Heart right ventricle (tissue), 16 donors: ENCODE measurements at regions of chr1 and their contacts with region 1.

Region 1: GRCh38 chr1:234309598-234310459 is 63.4 kb upstream of the COA6 start:
- DNase-seq: peak; percentile 35 to 39
- ATAC-seq: peak; percentile 62 to 81 (median 72)
- H3K4me3 ChIP-seq: no peak overlapping the region
- H3K27ac ChIP-seq: no peak overlapping the region
- H3K4me1 ChIP-seq: peaks cover 0 to 9% (median 0%) of the 10 kb centered on the region in 9 donors
- H3K27me3 ChIP-seq: peaks cover 0 to 30% (median 0%) of the 10 kb centered on the region in 7 donors
- CTCF ChIP-seq: peak; percentile 66 to 93 (median 79)

Region 2: GRCh38 chr1:234114648-234115307 is 195.1 kb before region 1 on chr1:
- intact Hi-C with region 1: loop called in 9 of 10 experiments (anchors 5 to 10 kb)
- DNase-seq: peak in 1 of 2 donors; percentile 26
- ATAC-seq: no peak
- H3K4me3 ChIP-seq: no peak overlapping the region
- H3K27ac ChIP-seq: no peak overlapping the region
- H3K4me1 ChIP-seq: no peaks in the 10 kb centered on the region
- H3K27me3 ChIP-seq: peaks cover 0 to 24% (median 3%) of the 10 kb centered on the region in 7 donors
- CTCF ChIP-seq: peak; percentile 27 to 78 (median 70)

Region 3: DNA sequence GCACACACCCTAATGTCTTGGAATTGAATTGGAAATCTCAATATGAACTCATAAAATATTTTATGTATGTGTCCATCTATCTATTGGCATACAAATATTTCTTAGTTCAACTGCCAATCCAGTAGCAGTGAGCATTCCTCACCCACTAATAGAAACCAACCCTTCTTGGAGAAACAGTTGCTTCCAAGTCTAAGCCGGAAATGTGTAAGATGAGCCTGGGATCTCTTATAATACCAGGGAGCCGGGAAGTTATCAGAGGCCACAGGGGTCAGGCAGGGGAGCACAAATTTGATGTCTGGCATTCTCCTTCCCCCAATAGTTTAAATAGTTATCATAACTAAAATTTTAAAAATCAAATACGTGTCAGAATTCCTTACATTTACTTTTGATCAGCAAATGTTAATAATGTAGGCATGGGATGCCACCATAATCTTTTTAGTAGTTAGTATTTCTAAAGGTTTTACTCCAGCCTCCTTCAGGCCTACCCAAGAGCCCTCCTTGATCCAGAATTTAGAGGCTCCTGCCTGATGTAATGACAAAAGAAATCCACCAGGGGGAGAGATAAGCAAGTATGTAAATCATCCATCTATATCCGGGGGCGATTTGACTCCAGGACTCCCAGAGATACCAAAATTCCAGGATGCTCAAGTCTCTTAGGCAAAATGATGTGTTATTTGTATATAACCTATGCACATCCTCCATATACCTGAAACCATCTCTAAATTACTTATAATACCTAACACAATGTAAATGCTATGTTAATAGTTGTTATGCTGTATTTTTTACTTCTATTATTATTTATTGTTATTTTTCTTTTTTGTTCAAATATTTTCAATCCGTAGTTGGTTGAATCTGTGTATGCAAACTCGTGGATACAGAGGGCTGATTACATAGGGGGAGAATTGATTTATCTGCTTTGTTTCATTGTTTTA is 155.2 kb before region 1 on chr1:
- intact Hi-C with region 1: loop called in 8 of 10 experiments (anchors 2 to 10 kb)
- DNase-seq: peak in 1 of 2 donors; percentile 14
- ATAC-seq: peak in 1 of 8 donors; percentile 33
- H3K4me3 ChIP-seq: no peak overlapping the region
- H3K27ac ChIP-seq: no peak overlapping the region
- H3K4me1 ChIP-seq: no peaks in the 10 kb centered on the region
- H3K27me3 ChIP-seq: peaks cover 0 to 10% (median 2%) of the 10 kb centered on the region in 7 donors
- CTCF ChIP-seq: peak; percentile 42 to 88 (median 73)

Region 4: GRCh38 chr1:234163267-234163919 is 146.4 kb before region 1 on chr1:
- intact Hi-C with region 1: loop called in 5 of 10 experiments (anchors 10 kb)
- DNase-seq: no peak
- ATAC-seq: peak in 2 of 8 donors; percentile 21 to 55
- H3K4me3 ChIP-seq: no peak overlapping the region
- H3K27ac ChIP-seq: no peak overlapping the region
- H3K4me1 ChIP-seq: no peaks in the 10 kb centered on the region
- H3K27me3 ChIP-seq: peaks cover 0 to 27% (median 4%) of the 10 kb centered on the region in 7 donors
- CTCF ChIP-seq: no peak

Region 5: DNA sequence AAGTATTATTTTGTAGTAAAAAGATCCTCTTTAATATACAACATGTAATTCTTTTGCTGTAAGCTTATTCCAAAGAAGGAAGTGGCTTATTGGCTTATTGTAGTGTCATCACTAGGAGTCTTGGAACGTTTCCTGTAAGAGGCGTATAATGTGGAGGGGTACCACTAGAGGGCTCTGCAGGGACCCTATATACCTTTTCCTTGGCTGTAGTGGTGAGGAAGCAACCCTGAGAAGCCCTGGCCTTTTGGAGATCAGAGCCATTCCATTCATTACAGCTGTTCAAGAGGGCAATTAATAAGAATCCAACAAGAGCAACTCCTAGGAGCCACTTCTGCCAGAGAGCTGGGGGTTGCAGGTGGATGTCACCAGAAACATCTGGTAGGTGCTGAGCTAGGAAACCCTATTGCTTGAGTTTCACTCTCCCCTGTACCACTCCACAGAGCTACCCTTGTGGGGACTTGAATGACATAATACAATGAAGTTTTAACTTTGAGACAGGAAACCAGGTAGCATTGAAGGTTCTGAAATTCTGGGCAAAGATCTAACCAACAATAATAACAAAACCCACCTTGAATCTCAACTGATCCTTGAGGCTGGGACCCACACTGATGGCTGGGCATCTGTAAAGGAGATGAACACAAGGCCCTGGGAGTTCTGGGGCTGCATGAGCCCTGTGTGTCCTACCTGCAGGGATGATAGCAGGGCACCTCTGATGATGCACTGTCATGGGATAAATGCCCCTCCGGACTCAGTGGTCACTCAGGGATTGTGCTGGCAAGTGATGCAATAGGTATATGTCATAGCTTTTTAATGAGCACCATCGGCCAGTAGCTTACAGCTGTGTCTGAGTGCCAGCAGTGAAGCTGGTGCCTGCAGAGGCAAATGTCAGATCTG is 96.8 kb before region 1 on chr1:
- intact Hi-C with region 1: loop called in 1 of 10 experiments (anchors 10 kb)
- DNase-seq: no peak
- ATAC-seq: peak in 5 of 8 donors; percentile 31 to 76 (median 61)
- H3K4me3 ChIP-seq: no peak overlapping the region
- H3K27ac ChIP-seq: no peak overlapping the region
- H3K4me1 ChIP-seq: peaks cover 4 to 25% (median 8%) of the 10 kb centered on the region in 9 donors
- H3K27me3 ChIP-seq: peaks cover 9 to 70% (median 55%) of the 10 kb centered on the region in 7 donors
- CTCF ChIP-seq: peak in 7 of 9 donors; percentile 21 to 55 (median 40)

Region 6: DNA sequence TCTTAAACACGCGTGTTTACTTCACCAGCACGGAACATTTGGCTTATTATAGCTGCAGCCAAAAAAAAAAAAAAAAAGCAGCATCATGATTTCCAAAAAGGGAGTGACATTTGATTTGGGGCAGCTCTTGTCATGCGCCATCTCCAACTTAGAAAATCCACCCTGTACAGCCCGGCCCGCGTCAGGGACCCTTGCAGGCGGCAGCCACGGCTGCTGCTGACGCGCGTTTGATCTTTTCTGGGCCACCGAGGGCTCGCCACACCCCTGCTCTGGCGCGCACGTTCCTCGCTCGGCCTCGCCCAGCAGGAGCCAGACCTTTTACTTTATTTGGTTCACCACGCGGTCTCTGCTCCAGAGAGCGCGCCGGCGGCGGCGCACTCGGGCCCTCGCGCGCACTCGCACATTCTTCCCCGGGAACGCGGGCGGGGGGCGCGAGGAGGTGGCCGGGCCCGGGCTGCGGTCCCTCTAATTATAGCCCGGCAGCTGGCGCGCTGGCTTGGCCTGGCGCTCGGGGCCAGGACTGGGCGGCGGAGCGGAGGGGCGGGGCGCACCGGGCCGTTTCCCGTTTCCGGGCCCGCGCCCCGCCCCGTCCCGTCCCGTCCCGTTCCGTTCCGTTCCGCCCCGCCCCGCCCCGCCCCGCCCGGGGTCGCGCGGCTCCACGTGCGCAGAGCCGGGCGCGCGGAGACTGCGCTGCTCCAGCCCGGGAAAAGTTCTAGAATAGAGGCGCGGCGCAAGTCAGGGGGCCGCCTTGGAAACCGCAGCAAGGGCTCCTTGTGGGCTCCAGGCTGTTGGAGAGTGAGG is 290.0 kb after region 1 on chr1:
- intact Hi-C with region 1: no loop called
- DNase-seq: peak; percentile 89 to 91
- ATAC-seq: peak; percentile 82 to 97 (median 91)
- H3K4me3 ChIP-seq: peak overlapping the region in 9 of 10 donors; percentile 29 to 95 (median 51)
- H3K27ac ChIP-seq: peak overlapping the region; percentile 91 to 100 (median 99)
- H3K4me1 ChIP-seq: peaks cover 3 to 70% (median 54%) of the 10 kb centered on the region in 9 donors
- H3K27me3 ChIP-seq: no peaks in the 10 kb centered on the region
- CTCF ChIP-seq: peak in 3 of 9 donors; percentile 22 to 36 (median 25)